ENCODE measurements at regions of chr3 and their contacts with region 1.

Region 1: GRCh38 chr3:114558271-114558670 is 264.4 kb downstream of the TIGIT start:
- DNase-seq: no peak
- H3K4me3 ChIP-seq: no peak overlapping the region
- CTCF ChIP-seq: no peak
- POLR2A ChIP-seq: no peak

Region 2: GRCh38 chr3:114270019-114270418 is 288.3 kb before region 1 on chr3:
- intact Hi-C with region 1: no loop called
- DNase-seq: no peak
- H3K4me3 ChIP-seq: no peak overlapping the region
- CTCF ChIP-seq: no peak
- POLR2A ChIP-seq: no peak

Region 3: GRCh38 chr3:114356066-114356465 is 202.2 kb before region 1 on chr3:
- intact Hi-C with region 1: no loop called
- DNase-seq: no peak
- H3K4me3 ChIP-seq: no peak overlapping the region
- CTCF ChIP-seq: no peak
- POLR2A ChIP-seq: no peak

Region 4: GRCh38 chr3:115169808-115170207 is 611.5 kb after region 1 on chr3:
- intact Hi-C with region 1: loop called (anchors 5 kb)
- DNase-seq: no peak
- H3K4me3 ChIP-seq: no peak overlapping the region
- CTCF ChIP-seq: no peak
- POLR2A ChIP-seq: no peak

Measured in lower leg skin (tissue), 4 donors.